ENCODE measurements at regions of chr7 and their contacts with region 1.

Region 1: GRCh38 chr7:100478966-100479665 is at the start of gene TSC22D4:
- DNase-seq: peak; percentile 97
- H3K4me3 ChIP-seq: peak within 1 kb of the TSS; percentile 71 to 99
- H3K27ac ChIP-seq: peak within 1 kb of the TSS; percentile 76 to 78
- H3K4me1 ChIP-seq: peaks cover 16 to 27% of the 10 kb centered on the region in 2 experiments; a peak in 3 of 4 replicates
- H3K27me3 ChIP-seq: no peaks in the 10 kb centered on the region
- CTCF ChIP-seq: no peak
- EP300 ChIP-seq: peak in 1 of 2 experiments; percentile 25; a peak in 1 of 4 replicates
- RAD21 ChIP-seq: no peak
- polyA plus RNA-seq, gene TSC22D4: 20.3 and 32.7 TPM in 2 replicates

Region 2: GRCh38 chr7:100456558-100456957 is 22.6 kb before region 1 on chr7:
- CTCF ChIA-PET with region 1: interaction called, 26 read pairs
- POLR2A ChIA-PET with region 1: interaction called, 4 read pairs
- DNase-seq: no peak
- H3K4me3 ChIP-seq: no peak overlapping the region
- H3K27ac ChIP-seq: no peak overlapping the region
- H3K4me1 ChIP-seq: no peaks in the 10 kb centered on the region
- H3K27me3 ChIP-seq: no peaks in the 10 kb centered on the region
- CTCF ChIP-seq: 0 out of 2 replicates have a peak, but pooled peaks have one; percentile 15
- EP300 ChIP-seq: no peak
- RAD21 ChIP-seq: no peak

Region 3: GRCh38 chr7:100496509-100496908 is 17.4 kb after region 1 on chr7:
- CTCF ChIA-PET with region 1: interaction called, 28 read pairs
- POLR2A ChIA-PET with region 1: no interaction called
- DNase-seq: no peak
- H3K4me3 ChIP-seq: no peak overlapping the region
- H3K27ac ChIP-seq: no peak overlapping the region
- H3K4me1 ChIP-seq: no peaks in the 10 kb centered on the region
- H3K27me3 ChIP-seq: no peaks in the 10 kb centered on the region
- CTCF ChIP-seq: no peak
- EP300 ChIP-seq: no peak
- RAD21 ChIP-seq: no peak

Region 4: DNA sequence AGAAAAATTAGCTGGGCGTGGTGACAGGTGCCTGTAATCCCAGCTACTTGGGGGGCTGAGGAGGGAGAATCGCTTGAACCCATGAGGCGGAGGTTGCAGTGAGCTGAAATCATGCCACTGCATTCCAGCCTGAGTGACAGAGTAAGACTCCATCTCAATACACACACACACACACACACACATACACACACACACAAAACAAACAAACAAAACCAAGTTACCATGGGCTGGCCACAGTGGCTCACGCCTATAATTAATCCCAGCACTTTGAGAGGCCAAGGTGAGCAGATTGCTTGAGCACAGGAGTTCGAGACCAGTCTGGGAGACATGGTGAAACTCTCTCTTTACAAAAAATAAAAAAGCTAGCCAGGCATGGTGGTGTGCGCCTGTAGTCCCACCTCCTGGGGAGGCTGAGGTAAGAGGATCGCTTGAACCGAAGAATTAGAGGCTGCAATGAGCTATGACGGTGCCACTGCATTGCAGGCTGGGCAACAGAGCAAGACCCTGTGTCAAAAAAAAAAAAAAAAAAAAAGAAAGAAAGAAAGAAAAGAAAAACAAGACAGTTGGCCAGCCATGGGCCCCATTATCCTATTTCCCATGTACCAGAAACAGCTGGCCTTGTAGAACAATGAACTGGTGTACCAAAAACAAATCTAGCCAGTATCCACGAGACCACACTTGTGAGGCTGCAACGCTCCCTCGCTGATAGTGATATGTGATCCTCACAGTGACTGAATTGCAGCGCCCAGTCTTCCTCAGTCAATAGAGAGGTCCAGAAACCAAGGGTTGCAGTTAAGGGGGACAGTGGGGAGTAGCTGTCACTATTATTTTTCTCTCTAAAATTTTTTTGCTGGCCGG is 53.3 kb after region 1 on chr7:
- CTCF ChIA-PET with region 1: interaction called, 19 read pairs
- POLR2A ChIA-PET with region 1: no interaction called
- DNase-seq: no peak
- H3K4me3 ChIP-seq: no peak overlapping the region
- H3K27ac ChIP-seq: no peak overlapping the region
- H3K4me1 ChIP-seq: no peaks in the 10 kb centered on the region
- H3K27me3 ChIP-seq: no peaks in the 10 kb centered on the region
- CTCF ChIP-seq: no peak
- EP300 ChIP-seq: no peak
- RAD21 ChIP-seq: no peak

Region 5: GRCh38 chr7:100556541-100556940 is 77.4 kb after region 1 on chr7:
- CTCF ChIA-PET with region 1: interaction called, 151 read pairs
- POLR2A ChIA-PET with region 1: interaction called, 4 read pairs
- DNase-seq: no peak
- H3K4me3 ChIP-seq: no peak overlapping the region
- H3K27ac ChIP-seq: no peak overlapping the region
- H3K4me1 ChIP-seq: no peaks in the 10 kb centered on the region; a peak in 1 of 4 replicates
- H3K27me3 ChIP-seq: no peaks in the 10 kb centered on the region
- CTCF ChIP-seq: no peak
- EP300 ChIP-seq: no peak
- RAD21 ChIP-seq: no peak

Region 6: GRCh38 chr7:100604028-100604975 is 125.2 kb after region 1 on chr7:
- CTCF ChIA-PET with region 1: interaction called, 11 read pairs
- POLR2A ChIA-PET with region 1: interaction called, 4 read pairs
- DNase-seq: peak; percentile 98
- H3K4me3 ChIP-seq: peak overlapping the region; percentile 67 to 76
- H3K27ac ChIP-seq: peak overlapping the region; percentile 69 to 97
- H3K4me1 ChIP-seq: peaks cover 10 to 25% of the 10 kb centered on the region in 2 experiments; a peak in 3 of 4 replicates
- H3K27me3 ChIP-seq: no peaks in the 10 kb centered on the region
- CTCF ChIP-seq: peak; percentile 59
- EP300 ChIP-seq: peak in 1 of 2 experiments; percentile 39; a peak in 1 of 4 replicates
- RAD21 ChIP-seq: no peak

Measured in SK-N-SH (cell line).